ENCODE measurements at regions of chr20 and their contacts with region 1.

Region 1: GRCh38 chr20:25623736-25624499 is at the start of gene NANP:
- DNase-seq: peak; percentile 98 to 99
- H3K4me3 ChIP-seq: peak within 1 kb of the TSS; percentile 91
- H3K27ac ChIP-seq: peak within 1 kb of the TSS; percentile 81 to 93
- H3K4me1 ChIP-seq: peaks cover 0 to 19% (median 11%) of the 10 kb centered on the region in 4 donors
- H3K27me3 ChIP-seq: no peaks in the 10 kb centered on the region
- CTCF ChIP-seq: peak in 1 of 2 experiments; percentile 2

Region 2: DNA sequence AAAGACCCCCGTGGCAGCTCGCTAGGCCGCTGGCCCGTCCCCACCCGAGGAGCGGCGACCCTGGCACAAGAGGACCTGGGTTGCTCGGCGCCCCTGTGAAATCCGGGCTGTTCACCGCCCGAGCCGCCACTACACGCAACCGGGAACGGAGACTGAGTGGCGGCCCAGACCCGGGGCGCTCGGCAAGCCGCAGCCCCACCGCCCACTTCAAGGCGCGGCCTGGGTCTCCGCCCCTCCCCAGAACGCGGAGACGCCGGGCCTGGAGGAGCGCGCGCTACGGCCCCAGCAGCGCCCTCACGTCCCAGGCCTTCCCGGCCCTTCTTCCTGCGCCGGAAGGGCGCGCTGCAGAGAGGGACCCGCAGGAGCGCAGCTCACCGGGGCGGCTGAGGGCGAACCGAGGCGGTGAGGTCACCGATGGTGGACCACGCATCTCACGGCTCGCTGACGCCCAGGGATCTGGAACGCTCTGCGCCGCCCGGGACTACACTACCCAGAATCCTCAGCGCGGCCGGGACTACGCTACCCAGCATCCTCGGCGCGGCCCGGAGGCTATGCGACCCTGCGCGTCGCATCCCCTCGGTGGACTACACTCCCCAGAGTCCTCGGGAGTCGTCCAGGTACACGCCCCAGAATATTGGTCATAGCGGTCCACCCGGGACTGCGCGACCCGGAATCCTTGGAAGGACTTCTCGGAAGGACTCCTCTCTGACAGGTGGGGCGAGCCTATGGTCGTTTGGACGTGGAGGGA is 72.6 kb after region 1 on chr20 and contains the start of gene ZNF337:
- intact Hi-C with region 1: loop called (anchors 2 kb)
- DNase-seq: peak; percentile 94 to 97
- H3K4me3 ChIP-seq: peak within 1 kb of the TSS; percentile 78 to 97
- H3K27ac ChIP-seq: peak within 1 kb of the TSS; percentile 87 to 95
- H3K4me1 ChIP-seq: peaks cover 0 to 15% (median 8%) of the 10 kb centered on the region in 4 donors
- H3K27me3 ChIP-seq: no peaks in the 10 kb centered on the region
- CTCF ChIP-seq: peak in 1 of 2 experiments; percentile 7

Region 3: DNA sequence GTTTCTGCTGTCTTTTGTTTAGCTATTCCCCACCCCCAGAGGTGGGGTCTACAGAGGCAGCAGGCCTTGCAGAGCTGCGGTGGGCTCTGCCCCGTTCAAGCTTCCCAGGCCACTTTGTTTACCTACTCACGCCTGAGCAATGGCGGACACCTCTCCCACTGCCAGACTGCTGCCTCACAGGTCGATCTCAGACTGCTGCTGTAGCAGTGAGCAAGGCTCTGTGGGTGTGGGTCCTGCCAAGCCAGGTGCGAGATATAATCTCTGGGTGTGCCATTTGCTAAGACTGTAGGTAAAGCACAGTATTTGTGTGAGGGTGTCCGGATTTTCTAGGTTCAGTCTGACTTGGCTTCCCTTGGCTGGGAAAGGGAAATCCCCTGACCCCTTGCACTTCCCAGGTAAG is 96.4 kb after region 1 on chr20:
- intact Hi-C with region 1: no loop called
- DNase-seq: no peak
- H3K4me3 ChIP-seq: no peak overlapping the region
- H3K27ac ChIP-seq: no peak overlapping the region
- H3K4me1 ChIP-seq: no peaks in the 10 kb centered on the region
- H3K27me3 ChIP-seq: no peaks in the 10 kb centered on the region
- CTCF ChIP-seq: no peak